Cardiac septum (tissue), 1 donor: ENCODE measurements at regions of chr11 and their contacts with region 1.

Region 1: GRCh38 chr11:133163463-133164419 is 368.6 kb downstream of the OPCML start:
- DNase-seq: no peak

Region 2: GRCh38 chr11:133011604-133012003 is 152.1 kb before region 1 on chr11:
- intact Hi-C with region 1: no loop called
- DNase-seq: no peak

Region 3: GRCh38 chr11:133082851-133083488 is 80.8 kb before region 1 on chr11:
- intact Hi-C with region 1: loop called (anchors 2 kb)
- DNase-seq: no peak

Region 4: DNA sequence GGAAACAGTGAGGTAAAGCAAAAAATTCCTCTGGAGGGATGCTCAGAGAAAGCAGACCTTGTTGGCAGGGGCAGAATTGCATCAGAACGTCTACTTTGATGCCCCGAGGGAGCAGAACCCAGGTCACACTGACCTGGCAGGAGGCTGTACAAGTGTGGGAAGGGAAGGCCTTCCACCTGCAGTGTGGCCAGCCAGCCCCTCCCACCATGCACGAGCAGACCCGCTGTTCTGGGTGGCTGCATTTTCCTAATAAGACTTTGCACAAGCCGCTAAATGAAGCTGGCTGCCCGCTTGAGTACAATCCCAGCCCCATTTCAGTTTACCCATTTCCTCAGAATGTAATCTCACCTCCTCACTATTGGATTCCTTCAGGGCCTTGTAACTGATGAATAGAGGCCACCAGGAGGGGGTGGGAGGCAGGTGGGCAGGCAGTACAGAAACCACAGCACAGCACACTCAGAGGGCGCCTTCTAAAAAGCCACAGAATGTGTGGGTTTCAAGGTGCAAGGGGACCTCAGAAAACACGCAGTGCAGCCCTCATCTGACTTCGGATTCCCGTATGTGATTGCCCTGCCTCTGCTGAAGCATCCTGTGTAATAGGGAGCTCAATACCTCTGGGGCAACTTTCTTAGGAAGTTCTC is 52.0 kb after region 1 on chr11:
- intact Hi-C with region 1: no loop called
- DNase-seq: no peak

Region 5: GRCh38 chr11:133821776-133822175 is 658.0 kb after region 1 on chr11:
- intact Hi-C with region 1: loop called (anchors 5 kb)
- DNase-seq: peak; percentile 71